ENCODE measurements at regions of chr7 and their contacts with region 1.

Region 1: GRCh38 chr7:139915864-139916716 is 87.0 kb downstream of the TBXAS1 start:
- DNase-seq: peak; percentile 89
- H3K4me3 ChIP-seq: peak overlapping the region; percentile 60
- H3K27ac ChIP-seq: peak overlapping the region; percentile 97
- H3K4me1 ChIP-seq: peaks cover 76% of the 10 kb centered on the region
- CTCF ChIP-seq: no peak

Region 2: GRCh38 chr7:139645572-139646523 is 270.2 kb before region 1 on chr7:
- CTCF ChIA-PET with region 1: no interaction called
- POLR2A ChIA-PET with region 1: no interaction called
- intact Hi-C with region 1: loop called (anchors 2 kb)
- DNase-seq: peak; percentile 82
- H3K4me3 ChIP-seq: no peak overlapping the region
- H3K27ac ChIP-seq: no peak overlapping the region
- H3K4me1 ChIP-seq: peaks cover 15% of the 10 kb centered on the region
- CTCF ChIP-seq: peak; percentile 94

Region 3: DNA sequence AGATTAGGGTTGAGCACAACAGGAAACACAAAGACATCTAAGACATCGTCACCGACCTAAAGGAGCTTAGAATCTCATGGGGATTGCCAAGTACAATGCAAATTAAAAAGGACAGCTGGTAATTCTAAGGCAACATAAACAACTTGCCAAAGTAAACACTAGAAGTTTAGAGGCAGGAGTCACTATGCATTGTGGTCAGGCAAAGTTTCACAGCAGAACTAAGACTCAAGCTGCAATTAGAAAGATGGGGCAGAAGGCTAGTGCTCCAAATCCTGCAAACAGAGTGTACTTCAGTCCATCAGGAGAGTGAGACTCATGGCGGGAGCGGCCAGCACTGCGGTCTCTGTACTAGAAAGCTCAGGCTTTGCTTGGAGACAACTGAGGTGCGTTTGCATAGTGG is 191.0 kb before region 1 on chr7:
- CTCF ChIA-PET with region 1: no interaction called
- POLR2A ChIA-PET with region 1: no interaction called
- intact Hi-C with region 1: no loop called
- DNase-seq: peak; percentile 4
- H3K4me3 ChIP-seq: no peak overlapping the region
- H3K27ac ChIP-seq: no peak overlapping the region
- H3K4me1 ChIP-seq: peaks cover 6% of the 10 kb centered on the region
- CTCF ChIP-seq: no peak

Region 4: GRCh38 chr7:139777948-139778841 is 137.9 kb before region 1 on chr7 and contains the start of gene HIPK2:
- CTCF ChIA-PET with region 1: no interaction called
- POLR2A ChIA-PET with region 1: interaction called, 4 read pairs
- intact Hi-C with region 1: loop called (anchors 1 kb)
- DNase-seq: peak; percentile 80
- H3K4me3 ChIP-seq: peak within 1 kb of the TSS; percentile 82
- H3K27ac ChIP-seq: peak within 1 kb of the TSS; percentile 0
- H3K4me1 ChIP-seq: peaks cover 23% of the 10 kb centered on the region
- CTCF ChIP-seq: no peak
- total RNA-seq, gene HIPK2: 5.9 and 6.2 TPM in 2 replicates

Region 5: GRCh38 chr7:139901056-139901795 is 14.9 kb before region 1 on chr7:
- CTCF ChIA-PET with region 1: interaction called, 4 read pairs
- POLR2A ChIA-PET with region 1: interaction called, 22 read pairs
- intact Hi-C with region 1: no loop called
- DNase-seq: peak; percentile 51
- H3K4me3 ChIP-seq: no peak overlapping the region
- H3K27ac ChIP-seq: no peak overlapping the region
- H3K4me1 ChIP-seq: peaks cover 36% of the 10 kb centered on the region
- CTCF ChIP-seq: no peak

Region 6: DNA sequence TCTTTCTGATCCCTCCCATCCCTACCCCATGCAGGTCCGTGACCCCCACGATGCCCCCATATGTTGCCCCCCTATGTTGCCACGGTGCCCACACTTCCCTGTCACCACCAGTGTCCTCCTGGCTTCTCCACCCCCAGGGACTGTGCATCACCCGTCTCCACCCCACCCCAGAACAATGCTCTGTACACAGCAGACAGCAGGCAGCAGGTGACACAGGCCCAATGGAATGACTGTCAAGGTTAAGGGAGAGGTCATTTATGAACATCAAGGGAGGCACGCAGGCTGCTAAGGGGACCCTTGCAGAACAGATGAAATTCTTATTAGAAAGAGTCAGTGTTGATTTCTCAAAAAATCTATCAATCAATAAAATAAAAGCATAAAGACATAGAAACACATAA is 75.2 kb after region 1 on chr7:
- CTCF ChIA-PET with region 1: interaction called, 3 read pairs
- POLR2A ChIA-PET with region 1: interaction called, 3 read pairs
- intact Hi-C with region 1: loop called (anchors 2 kb)
- DNase-seq: no peak
- H3K4me3 ChIP-seq: no peak overlapping the region
- H3K27ac ChIP-seq: no peak overlapping the region
- H3K4me1 ChIP-seq: peaks cover 18% of the 10 kb centered on the region
- CTCF ChIP-seq: no peak

Region 7: GRCh38 chr7:140121326-140121725 is 205.2 kb after region 1 on chr7:
- CTCF ChIA-PET with region 1: no interaction called
- POLR2A ChIA-PET with region 1: no interaction called
- intact Hi-C with region 1: no loop called
- DNase-seq: no peak
- H3K4me3 ChIP-seq: no peak overlapping the region
- H3K27ac ChIP-seq: no peak overlapping the region
- H3K4me1 ChIP-seq: no peaks in the 10 kb centered on the region
- CTCF ChIP-seq: no peak